Activated T-helper 1 cell treated with anti-CD3 and anti-CD28 coated beads, Interleukin-12 subunit alpha, Interleukin-12 subunit beta, Interleukin-2, Interleukin-4 antibody, amounts not matched to agents 30 ng/mL and 10 ng/mL and 1 ng/mL, durations not matched to agents 14 hours and 24 hours and 36 hours (primary cell): ENCODE measurements at regions of chr14 and their contacts with region 1.

Region 1: DNA sequence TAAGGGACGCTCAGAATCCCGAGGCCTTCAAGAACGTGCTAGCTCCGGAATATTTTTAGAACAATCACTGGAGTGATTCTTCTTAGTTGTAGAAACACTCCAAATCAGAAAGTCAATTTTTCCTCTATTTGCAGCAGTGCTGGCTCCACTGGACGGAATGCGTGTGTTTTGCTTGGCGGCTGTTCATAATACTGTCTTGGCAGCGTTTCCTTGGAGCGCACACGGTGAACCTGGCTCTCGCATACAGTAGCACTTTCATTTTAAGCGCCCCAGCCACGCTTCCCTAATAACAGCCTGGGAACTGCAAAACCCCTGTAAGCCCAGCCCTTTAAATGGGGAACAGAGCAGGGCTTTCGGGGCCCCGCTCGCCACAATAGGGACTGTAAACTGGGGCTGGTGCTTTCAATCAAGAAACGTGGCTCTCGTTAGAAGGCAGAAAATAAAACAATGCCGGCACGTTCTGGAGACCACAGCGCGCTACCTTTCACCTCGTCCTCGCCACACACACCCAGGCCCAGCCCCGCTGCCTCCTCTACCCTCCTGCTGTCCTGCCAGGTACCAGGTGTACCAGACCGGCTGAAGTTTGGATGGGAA is 79.9 kb downstream of the BCL11B start:
- DNase-seq: no peak
- H3K4me3 Mint-ChIP-seq: peak overlapping the region; percentile 90
- H3K27ac Mint-ChIP-seq: peak overlapping the region; percentile 99
- H3K4me1 Mint-ChIP-seq: peaks cover 93% of the 10 kb centered on the region
- H3K27me3 Mint-ChIP-seq: no peaks in the 10 kb centered on the region

Region 2: DNA sequence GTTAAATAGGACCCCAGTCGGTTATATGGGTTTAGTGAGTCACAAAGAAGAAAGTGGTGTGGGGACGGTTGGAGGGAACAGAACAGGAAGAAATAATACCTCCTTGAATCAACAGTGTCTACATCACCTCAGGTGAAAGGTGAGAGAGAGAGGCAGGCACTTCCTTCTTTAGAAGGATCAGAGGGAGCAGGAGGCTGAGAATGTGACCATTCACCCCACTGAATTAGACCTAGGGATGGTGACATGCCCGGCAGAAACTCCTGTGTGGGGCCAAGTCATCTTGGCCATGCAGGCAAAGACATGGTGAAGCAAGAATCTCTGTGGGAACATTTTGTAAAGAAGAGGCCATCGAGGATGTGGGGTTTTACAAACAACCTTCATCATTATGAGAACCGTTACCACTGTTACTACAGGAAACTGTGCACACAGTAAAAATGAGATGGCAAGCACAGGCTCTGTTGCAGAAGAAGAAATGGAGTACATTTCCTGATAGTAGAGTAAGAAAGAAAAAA is 1198.0 kb before region 1 on chr14:
- intact Hi-C with region 1: loop called (anchors 5 kb)
- DNase-seq: peak; percentile 37
- H3K4me3 Mint-ChIP-seq: peak overlapping the region; percentile 21
- H3K27ac Mint-ChIP-seq: peak overlapping the region; percentile 88
- H3K4me1 Mint-ChIP-seq: peaks cover 47% of the 10 kb centered on the region
- H3K27me3 Mint-ChIP-seq: no peaks in the 10 kb centered on the region

Region 3: DNA sequence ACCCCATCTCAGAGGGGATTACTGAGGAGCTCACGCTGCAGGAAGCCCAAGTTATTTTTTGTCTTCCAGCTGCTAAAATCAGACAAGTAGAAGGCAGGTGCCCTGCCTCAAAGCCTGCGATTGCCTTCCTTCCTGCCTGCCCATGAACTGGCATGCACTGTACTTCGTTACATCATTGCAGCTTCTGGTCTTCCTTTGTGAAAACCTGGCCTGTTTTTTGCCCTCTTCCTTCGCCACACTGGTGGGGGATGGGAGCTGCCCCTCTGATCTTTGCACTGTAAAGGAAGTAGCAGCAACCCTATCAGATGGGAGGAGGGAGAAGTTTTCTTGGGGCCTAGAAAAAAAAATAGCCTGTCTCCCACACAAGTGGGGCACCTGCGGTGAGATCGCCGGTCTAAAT is 1018.8 kb before region 1 on chr14:
- intact Hi-C with region 1: loop called (anchors 2 kb)
- DNase-seq: peak; percentile 45
- H3K4me3 Mint-ChIP-seq: peak overlapping the region; percentile 73
- H3K27ac Mint-ChIP-seq: peak overlapping the region; percentile 90
- H3K4me1 Mint-ChIP-seq: peaks cover 97% of the 10 kb centered on the region
- H3K27me3 Mint-ChIP-seq: no peaks in the 10 kb centered on the region

Region 4: DNA sequence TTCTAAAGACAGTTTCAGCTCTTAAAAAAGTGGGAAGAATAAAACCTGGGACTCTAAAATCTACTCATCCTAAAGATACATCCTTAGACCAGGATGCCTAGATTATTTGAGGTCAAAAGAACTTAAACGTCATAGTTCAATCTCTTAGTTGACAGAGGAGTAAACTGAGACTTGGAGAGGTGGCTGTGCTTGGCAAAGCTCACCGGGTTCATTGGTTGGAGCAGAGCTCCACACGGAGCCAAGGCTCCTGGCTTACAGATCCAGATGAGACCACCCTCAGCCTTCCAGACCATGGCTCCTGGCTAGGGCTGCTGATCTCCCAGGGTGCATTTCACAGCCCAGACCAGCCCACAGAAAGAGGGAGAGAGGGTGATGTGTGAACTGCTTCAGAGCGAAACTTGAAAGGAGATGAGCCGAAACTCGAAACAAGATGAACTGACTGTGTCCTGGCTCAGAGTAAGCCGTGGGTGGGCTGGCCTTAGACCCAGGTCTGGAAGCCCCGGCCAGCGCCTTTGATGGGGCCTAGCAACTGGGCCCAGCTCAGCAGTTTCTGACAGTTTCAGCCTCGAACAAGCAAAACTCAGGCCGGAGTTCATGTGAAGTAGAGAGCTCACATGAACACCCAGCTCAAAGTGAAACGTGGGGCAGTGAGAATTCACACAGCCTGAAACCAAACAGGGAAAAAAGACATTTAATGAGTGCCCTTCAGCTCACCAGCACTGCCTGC is 965.0 kb before region 1 on chr14:
- intact Hi-C with region 1: loop called (anchors 10 kb)
- DNase-seq: peak; percentile 36
- H3K4me3 Mint-ChIP-seq: peak overlapping the region; percentile 54
- H3K27ac Mint-ChIP-seq: peak overlapping the region; percentile 81
- H3K4me1 Mint-ChIP-seq: peaks cover 63% of the 10 kb centered on the region
- H3K27me3 Mint-ChIP-seq: no peaks in the 10 kb centered on the region

Region 5: GRCh38 chr14:99213101-99213500 is 21.0 kb after region 1 on chr14:
- intact Hi-C with region 1: loop called (anchors 1 kb)
- DNase-seq: no peak
- H3K4me3 Mint-ChIP-seq: peak overlapping the region; percentile 66
- H3K27ac Mint-ChIP-seq: peak overlapping the region; percentile 92
- H3K4me1 Mint-ChIP-seq: peaks cover 96% of the 10 kb centered on the region
- H3K27me3 Mint-ChIP-seq: no peaks in the 10 kb centered on the region

Region 6: GRCh38 chr14:99230208-99231151 is 38.4 kb after region 1 on chr14:
- intact Hi-C with region 1: loop called (anchors 1 kb)
- DNase-seq: peak; percentile 82
- H3K4me3 Mint-ChIP-seq: peak overlapping the region; percentile 78
- H3K27ac Mint-ChIP-seq: peak overlapping the region; percentile 98
- H3K4me1 Mint-ChIP-seq: peaks cover 89% of the 10 kb centered on the region
- H3K27me3 Mint-ChIP-seq: no peaks in the 10 kb centered on the region

Region 7: DNA sequence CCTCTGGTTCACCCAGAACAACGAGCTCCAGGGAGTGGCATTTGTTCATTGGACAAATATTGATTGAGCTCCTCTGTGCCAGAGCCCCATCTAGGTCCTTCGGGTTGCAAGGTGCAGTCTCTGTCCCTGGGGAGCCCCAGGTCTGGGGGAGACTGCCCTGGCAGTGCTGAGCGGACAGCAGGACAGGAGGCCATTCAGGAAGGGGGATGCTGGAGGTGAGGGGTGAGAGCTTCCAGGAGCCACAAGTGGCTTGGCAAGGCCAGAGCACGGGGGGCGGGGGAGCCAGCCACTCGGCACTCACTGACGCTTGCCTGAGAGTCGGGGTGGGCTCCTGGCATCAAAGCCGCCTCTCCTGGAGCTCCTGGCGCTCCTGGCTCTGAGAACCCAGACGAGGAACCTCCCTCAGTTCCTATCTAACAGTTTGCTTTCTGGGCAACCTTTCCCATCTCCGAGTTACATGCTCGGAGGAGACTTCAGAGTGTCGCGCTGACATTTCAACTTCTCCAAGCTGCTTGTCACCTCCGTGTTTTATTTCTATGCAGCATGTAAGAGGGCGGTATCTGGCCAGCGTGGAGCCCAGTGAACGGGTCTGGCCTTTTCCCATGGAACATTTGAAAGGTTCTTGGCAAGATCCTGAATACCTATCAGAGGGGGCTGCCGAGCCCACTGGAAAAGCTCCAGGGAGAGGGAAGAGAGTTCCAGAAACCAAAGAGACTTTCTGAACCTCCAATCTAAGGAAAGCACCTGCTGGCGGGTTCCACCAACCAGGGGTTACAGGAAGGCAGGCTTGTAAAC is 141.9 kb after region 1 on chr14:
- intact Hi-C with region 1: no loop called
- DNase-seq: no peak
- H3K4me3 Mint-ChIP-seq: no peak overlapping the region
- H3K27ac Mint-ChIP-seq: no peak overlapping the region
- H3K4me1 Mint-ChIP-seq: no peaks in the 10 kb centered on the region
- H3K27me3 Mint-ChIP-seq: peaks cover 5% of the 10 kb centered on the region

Region 8: GRCh38 chr14:100078991-100079725 is 887.0 kb after region 1 on chr14:
- intact Hi-C with region 1: loop called (anchors 5 kb)
- DNase-seq: peak; percentile 82
- H3K4me3 Mint-ChIP-seq: peak overlapping the region; percentile 75
- H3K27ac Mint-ChIP-seq: peak overlapping the region; percentile 92
- H3K4me1 Mint-ChIP-seq: peaks cover 97% of the 10 kb centered on the region
- H3K27me3 Mint-ChIP-seq: no peaks in the 10 kb centered on the region